ENCODE measurements at regions of chr3 and their contacts with region 1.

Region 1: DNA sequence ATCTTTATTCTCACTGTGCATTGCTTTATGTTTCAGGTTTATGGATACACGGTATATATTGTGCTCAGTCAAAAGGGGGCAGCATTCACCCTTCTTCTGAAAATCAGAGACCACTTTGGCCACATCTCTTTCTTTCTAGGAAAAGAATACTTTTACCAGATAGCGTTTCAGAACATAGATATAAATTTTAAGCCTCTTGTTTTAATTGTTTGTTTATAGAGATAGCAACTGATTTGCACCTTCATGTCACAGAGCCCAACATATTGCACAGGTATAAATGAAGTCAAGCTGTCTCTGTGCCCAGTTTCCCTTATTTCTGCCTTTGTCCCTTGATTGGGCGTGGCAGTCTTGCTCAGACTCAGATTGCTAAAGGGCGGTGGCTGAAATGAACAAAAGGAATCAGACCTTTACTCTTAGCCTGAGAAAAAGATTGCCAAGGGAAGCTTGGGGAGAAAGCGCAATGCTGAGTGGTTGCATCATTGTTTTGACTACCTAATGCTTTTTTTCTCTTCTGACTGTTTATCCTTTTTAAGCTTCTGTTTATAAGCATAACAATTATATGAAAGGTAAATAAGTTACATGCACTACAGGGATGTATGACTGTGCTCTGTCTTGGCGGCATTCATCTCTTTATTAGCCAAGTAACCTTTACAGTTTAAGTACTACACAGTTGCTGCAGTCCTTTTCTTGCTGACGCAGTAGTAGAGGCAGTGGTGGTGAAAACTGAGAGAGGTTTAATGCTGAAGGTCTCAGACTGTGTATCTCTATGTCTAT is 70.8 kb upstream of the ZBTB20 start:
- DNase-seq: peak; percentile 47
- H3K4me3 ChIP-seq: no peak overlapping the region
- H3K27ac ChIP-seq: peak overlapping the region; percentile 41
- H3K27me3 ChIP-seq: no peaks in the 10 kb centered on the region
- CTCF ChIP-seq: peak; percentile 80

Region 2: DNA sequence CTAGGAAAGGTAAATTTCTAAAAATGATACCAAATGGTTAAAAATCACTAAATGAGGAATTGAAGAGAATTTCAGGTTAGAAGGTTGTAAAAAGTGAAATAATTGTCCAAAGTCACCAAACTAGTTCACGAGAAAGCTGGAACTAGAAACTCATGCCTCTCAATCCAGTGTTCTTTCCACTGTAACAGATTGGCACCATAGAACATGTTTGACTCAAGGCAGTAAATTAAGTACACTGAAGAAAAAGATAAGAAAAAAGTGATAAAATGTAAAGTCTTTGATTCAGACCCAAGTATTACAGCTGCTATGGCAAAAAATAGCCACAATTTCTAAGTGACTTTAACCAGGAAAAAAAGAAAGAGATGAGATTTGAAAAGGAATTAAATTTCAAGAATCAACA is 97.3 kb before region 1 on chr3:
- CTCF ChIA-PET with region 1: no interaction called
- POLR2A ChIA-PET with region 1: no interaction called
- DNase-seq: no peak
- H3K4me3 ChIP-seq: no peak overlapping the region
- H3K27ac ChIP-seq: no peak overlapping the region
- H3K27me3 ChIP-seq: no peaks in the 10 kb centered on the region
- CTCF ChIP-seq: no peak

Region 3: DNA sequence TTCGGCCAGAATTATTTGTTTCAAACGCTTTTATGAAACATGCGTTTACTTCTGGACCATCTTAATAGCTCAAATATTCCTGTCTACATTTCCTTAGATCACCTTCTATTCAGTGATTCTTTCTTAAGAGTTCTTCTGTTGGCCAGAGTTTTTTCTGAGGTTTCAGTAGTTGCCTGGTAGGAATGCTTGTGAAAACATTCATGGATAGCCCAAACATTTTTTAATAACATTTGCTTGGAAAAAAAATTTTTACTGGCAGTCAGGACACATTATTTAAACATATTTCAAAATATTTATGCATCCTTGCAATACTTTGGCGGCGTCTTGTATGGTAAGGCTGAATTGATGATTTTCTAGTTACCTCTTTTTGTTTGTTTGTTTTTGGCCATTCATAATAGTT is 23.4 kb before region 1 on chr3:
- CTCF ChIA-PET with region 1: interaction called, 16 read pairs
- POLR2A ChIA-PET with region 1: no interaction called
- DNase-seq: no peak
- H3K4me3 ChIP-seq: no peak overlapping the region
- H3K27ac ChIP-seq: no peak overlapping the region
- H3K27me3 ChIP-seq: no peaks in the 10 kb centered on the region
- CTCF ChIP-seq: no peak

Region 4: GRCh38 chr3:115692887-115693524 is 475.1 kb after region 1 on chr3:
- CTCF ChIA-PET with region 1: interaction called, 60 read pairs
- POLR2A ChIA-PET with region 1: no interaction called
- DNase-seq: no peak
- H3K4me3 ChIP-seq: no peak overlapping the region
- H3K27ac ChIP-seq: no peak overlapping the region
- H3K27me3 ChIP-seq: no peaks in the 10 kb centered on the region
- CTCF ChIP-seq: peak; percentile 89

Region 5: DNA sequence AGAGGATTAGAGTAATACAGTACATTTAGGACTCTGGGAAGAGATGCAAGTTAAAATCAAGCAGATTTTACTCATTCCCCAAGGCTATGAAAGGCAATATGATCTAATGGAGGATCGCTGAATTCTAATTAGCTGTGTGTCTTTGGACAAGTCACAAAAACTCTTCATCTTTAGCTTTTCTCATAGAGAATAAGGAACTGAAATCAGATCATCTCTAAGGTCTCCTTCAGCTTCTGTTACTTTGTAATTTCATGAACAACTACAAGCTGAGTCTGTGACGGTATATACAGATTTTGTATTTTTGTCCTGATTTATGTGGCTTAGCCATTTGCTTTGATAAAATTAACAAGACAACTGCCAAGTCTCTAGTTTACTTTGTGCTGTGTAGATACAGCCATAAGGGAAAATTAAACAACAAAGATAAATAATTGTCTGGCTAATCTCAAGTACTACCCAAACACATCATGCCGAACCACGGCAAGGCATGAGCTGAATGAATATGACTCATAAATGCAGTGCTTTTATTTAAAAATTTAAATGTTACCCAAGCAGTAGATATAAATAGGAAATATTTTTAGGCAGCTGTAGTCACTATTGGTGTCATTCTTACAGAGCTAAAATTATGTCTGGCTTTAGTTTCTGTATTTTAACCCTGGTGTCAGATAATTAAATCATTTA is 486.9 kb after region 1 on chr3:
- CTCF ChIA-PET with region 1: interaction called, 23 read pairs
- POLR2A ChIA-PET with region 1: interaction called, 3 read pairs
- DNase-seq: no peak
- H3K4me3 ChIP-seq: no peak overlapping the region
- H3K27ac ChIP-seq: no peak overlapping the region
- H3K27me3 ChIP-seq: no peaks in the 10 kb centered on the region
- CTCF ChIP-seq: no peak

Region 6: DNA sequence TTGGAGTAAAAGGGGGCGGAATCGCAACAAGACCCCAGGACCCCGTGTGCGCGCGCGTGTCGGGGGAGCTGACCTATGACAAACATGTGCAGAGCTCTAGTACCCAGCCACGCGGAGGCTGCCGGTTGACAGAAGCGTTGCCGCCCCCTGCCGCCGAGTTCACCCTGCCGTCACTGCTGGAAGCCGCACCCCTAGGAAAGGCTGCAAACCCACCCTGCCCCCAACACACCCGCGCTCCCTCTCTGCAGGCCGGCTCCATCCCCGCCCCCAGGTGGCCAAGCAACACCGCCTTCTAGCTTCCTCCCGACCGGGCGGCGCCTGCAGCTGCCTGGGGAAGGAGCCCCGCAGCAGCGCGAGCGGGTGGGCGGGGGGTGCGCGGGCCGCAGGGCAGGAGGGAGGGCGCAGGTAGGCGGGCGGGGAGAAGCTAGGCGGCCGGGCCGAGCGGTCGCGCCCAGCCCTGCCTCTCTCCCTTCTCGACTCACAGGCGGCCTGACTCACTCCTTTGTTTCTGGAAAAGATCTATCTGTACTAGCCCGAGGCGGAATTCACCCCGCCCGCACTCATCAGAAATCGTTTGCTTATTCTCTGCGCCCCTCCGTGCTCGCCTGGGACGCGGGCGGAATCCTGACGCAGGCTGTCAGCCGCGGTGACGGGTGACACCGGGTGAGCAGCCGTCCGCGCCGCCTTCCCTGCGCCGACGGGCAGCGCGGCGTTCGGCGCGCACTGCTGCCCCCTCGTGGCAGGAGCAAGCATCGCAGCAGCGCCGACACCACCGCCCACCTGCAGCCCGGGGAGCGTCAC is 566.3 kb after region 1 on chr3:
- CTCF ChIA-PET with region 1: interaction called, 49 read pairs
- POLR2A ChIA-PET with region 1: interaction called, 3 read pairs
- DNase-seq: peak; percentile 88
- H3K4me3 ChIP-seq: peak overlapping the region; percentile 65
- H3K27ac ChIP-seq: peak overlapping the region; percentile 97
- H3K27me3 ChIP-seq: no peaks in the 10 kb centered on the region
- CTCF ChIP-seq: peak; percentile 91

Region 7: GRCh38 chr3:115819785-115820384 is 602.0 kb after region 1 on chr3:
- CTCF ChIA-PET with region 1: interaction called, 60 read pairs
- POLR2A ChIA-PET with region 1: no interaction called
- DNase-seq: peak; percentile 74
- H3K4me3 ChIP-seq: no peak overlapping the region
- H3K27ac ChIP-seq: no peak overlapping the region
- H3K27me3 ChIP-seq: no peaks in the 10 kb centered on the region
- CTCF ChIP-seq: peak; percentile 96